ENCODE measurements at regions of chr12 and their contacts with region 1.

Region 1: DNA sequence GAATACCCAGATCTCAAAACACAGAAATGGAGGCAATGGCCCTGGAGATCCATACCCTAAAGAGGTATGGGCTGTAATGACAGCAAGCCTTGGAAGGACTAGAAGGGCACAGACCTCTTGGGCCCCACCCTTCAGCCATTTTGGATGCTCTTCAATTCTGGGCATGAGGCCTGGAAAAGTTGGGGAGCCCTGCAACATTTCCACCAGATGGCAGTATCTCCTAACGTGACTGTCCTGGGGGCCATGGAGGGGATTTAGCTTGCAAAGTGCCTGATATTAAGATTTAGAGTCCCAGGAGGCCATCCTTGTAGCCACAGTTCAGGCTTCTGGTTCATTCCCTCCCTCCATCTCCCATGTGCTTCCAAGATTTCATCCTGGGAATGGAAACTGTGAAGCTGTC is 30.2 kb downstream of the KCNA5 start:
- DNase-seq: no peak
- ATAC-seq: no peak
- H3K4me3 ChIP-seq: no peak overlapping the region
- H3K27ac ChIP-seq: no peak overlapping the region
- H3K4me1 ChIP-seq: no peaks in the 10 kb centered on the region
- CTCF ChIP-seq: no peak
- EP300 ChIP-seq: no peak
- POLR2A ChIP-seq: no peak
- RAD21 ChIP-seq: peak in 1 of 2 experiments; percentile 23; a peak in 1 of 5 replicates

Region 2: DNA sequence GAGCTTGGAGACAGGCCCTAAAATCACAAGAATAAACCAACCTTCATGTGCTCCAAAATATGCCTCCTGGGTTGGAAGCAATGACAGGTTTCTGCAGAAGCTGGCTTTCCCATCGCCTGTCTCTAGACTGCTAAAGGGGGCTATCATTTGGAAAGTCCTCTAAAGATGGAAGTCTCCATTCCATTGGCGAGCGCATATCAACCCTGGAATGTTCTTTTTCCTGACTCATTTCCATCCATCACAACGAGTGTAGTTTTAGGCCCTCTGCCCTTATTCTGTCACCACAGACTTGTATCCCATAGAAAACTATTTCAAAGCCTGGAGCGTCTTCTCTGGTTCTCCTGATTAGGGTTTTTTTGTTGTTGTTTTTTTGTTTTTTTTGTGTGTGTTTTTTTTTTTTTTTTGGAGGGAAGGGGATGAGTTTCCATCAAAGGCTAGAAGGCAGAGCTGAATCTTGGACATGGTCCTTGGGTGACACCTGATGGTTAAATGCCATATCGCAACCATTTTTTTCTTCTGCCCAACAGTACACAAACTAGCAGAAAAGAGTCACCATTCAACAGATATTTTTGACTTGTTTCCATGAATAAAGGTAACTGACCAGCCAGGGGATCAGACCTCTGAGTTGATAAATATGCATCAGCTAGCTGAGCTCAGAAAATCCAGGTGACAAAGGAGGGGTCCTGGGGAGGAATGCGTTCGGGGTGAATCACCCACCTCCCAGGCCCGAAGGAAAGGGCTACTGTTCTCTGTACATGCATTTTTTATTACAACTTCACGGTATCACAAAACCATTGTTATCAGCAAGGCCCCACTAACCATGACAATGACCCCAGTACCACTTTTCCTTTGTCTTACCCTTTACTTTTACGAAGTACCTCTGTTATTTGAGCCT is 10.3 kb after region 1 on chr12:
- CTCF ChIA-PET with region 1: interaction called, 57 read pairs
- POLR2A ChIA-PET with region 1: no interaction called
- DNase-seq: peak; percentile 53 to 63
- ATAC-seq: peak in 1 of 2 experiments; percentile 81; a peak in 3 of 6 replicates
- H3K4me3 ChIP-seq: no peak overlapping the region
- H3K27ac ChIP-seq: no peak overlapping the region
- H3K4me1 ChIP-seq: peaks cover 5% of the 10 kb centered on the region; the same call in 1 of the 3 replicates
- CTCF ChIP-seq: peak; percentile 68
- EP300 ChIP-seq: no peak
- POLR2A ChIP-seq: no peak
- RAD21 ChIP-seq: peak; percentile 69 to 80

Measured in A549 (cell line).